ENCODE measurements at regions of chr19 and their contacts with region 1.

Region 1: DNA sequence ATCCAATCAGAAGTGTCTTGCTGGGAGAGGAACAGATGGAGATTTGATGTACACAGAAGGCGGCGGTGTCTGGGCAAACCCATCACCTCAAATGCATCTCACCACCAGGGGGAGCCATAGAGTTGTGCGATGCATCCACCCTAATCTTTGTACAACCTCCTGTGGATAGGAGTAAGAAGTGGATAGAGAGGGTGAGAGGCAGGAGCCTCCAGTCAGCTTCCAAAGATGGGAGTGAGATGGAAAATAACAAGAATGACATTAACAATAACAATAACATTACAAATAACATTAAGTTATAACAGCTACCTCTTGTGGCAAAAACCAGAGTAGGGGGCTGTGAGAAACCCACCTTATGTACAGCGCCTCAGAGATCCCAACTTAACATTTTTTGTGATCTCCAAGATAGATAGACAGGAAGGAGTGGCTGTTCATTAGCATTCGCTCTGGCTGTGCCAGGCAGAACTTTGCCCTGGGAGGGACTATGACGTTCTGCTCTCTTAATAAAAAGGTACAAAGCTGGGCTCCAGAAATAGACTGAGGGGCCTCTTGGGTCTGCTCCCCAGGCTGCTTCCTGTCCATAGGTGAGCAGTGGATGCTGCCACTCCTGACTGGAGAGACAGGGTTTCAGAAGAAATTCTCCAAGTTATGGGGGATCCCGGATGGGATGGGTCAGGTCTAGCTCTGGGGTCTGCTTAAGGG is 5.2 kb upstream of the CEACAM18 start:
- DNase-seq: peak; percentile 95
- ATAC-seq: peak; percentile 93
- H3K4me3 Mint-ChIP-seq: no peak overlapping the region
- H3K27ac Mint-ChIP-seq: no peak overlapping the region
- H3K4me1 Mint-ChIP-seq: peaks cover 18% of the 10 kb centered on the region
- H3K27me3 Mint-ChIP-seq: peaks cover 8% of the 10 kb centered on the region
- CTCF ChIP-seq: peak; percentile 96

Region 2: GRCh38 chr19:51399231-51399630 is 73.9 kb before region 1 on chr19:
- CTCF ChIA-PET with region 1: interaction called, 11 read pairs
- POLR2A ChIA-PET with region 1: no interaction called
- intact Hi-C with region 1: no loop called
- DNase-seq: no peak
- ATAC-seq: no peak
- H3K4me3 Mint-ChIP-seq: no peak overlapping the region
- H3K27ac Mint-ChIP-seq: no peak overlapping the region
- H3K4me1 Mint-ChIP-seq: peaks cover 36% of the 10 kb centered on the region
- H3K27me3 Mint-ChIP-seq: no peaks in the 10 kb centered on the region
- CTCF ChIP-seq: no peak

Region 3: GRCh38 chr19:51441410-51442390 is 31.5 kb before region 1 on chr19:
- CTCF ChIA-PET with region 1: interaction called, 10 read pairs
- POLR2A ChIA-PET with region 1: interaction called, 3 read pairs
- intact Hi-C with region 1: no loop called
- DNase-seq: peak; percentile 99
- ATAC-seq: peak; percentile 90
- H3K4me3 Mint-ChIP-seq: peak overlapping the region; percentile 74
- H3K27ac Mint-ChIP-seq: peak overlapping the region; percentile 94
- H3K4me1 Mint-ChIP-seq: peaks cover 61% of the 10 kb centered on the region
- H3K27me3 Mint-ChIP-seq: peaks cover 3% of the 10 kb centered on the region
- CTCF ChIP-seq: no peak

Region 4: DNA sequence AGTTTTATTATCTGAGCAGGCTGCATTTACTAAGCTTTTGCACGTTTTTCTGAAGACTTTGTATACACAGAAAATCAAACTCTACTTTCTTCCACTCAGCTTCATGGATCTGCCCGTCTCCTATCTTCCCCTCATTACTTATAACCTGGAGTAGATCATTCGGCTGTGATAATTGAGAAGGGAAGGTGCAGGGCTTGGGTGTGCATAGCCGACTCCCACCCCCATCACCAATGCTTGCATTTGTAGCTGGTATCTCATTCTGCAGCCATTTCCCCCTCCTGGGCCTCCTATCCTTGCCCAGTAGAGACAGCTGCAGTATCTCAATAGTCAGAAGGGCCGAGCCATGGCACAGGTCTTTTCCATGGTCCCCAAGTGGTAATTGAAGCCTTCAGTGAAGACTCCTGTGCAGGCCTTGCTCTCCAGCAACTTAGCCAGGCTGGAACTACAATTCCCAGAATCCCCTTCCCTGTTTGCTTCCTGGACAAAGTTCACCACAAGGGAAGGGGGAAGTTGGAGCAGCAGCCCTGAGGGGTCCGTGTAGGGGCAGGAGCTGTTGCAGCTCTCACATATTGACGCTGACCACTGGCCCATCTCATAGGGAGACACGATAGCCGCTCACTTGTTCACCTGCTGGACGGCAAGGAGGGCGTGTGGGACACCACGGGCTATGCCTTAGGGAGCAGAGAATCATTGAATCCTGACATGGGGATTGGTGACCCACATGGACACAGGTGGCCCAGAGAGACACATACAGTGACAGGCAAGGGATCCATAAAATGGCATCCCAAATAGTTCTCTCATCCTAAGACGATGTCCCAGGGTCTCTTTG is 12.8 kb before region 1 on chr19:
- CTCF ChIA-PET with region 1: interaction called, 34 read pairs
- POLR2A ChIA-PET with region 1: no interaction called
- intact Hi-C with region 1: no loop called
- DNase-seq: no peak
- ATAC-seq: no peak
- H3K4me3 Mint-ChIP-seq: no peak overlapping the region
- H3K27ac Mint-ChIP-seq: no peak overlapping the region
- H3K4me1 Mint-ChIP-seq: peaks cover 17% of the 10 kb centered on the region
- H3K27me3 Mint-ChIP-seq: peaks cover 47% of the 10 kb centered on the region
- CTCF ChIP-seq: no peak

Region 5: DNA sequence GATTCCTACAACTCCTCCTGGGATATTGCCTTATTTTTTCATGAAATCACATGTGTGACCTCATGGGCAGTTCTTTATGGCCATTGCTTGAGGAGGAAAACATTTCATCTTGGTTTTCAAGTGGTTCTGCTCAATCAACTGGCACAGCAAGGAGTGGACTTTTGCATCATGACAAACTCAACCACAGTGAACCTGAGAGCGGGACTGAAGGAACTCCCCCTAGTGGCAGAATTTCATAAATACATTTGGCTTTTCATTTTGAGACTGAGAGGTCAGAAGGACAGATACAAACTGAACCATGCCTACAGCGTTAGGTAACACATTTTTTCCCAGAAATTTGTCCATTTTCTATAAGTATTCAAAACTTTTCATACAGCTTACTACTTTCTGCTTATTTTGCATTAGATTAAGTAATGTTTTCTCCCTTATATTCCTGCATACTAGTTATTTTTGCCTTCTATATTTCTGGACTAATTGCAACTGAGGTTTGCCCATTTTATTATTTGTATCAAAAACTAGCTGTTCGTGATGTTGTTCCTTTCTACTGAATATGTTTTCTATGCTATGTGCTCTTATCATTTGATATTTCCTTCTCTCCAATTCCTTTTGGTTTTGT is 41.8 kb after region 1 on chr19:
- CTCF ChIA-PET with region 1: interaction called, 114 read pairs
- POLR2A ChIA-PET with region 1: interaction called, 3 read pairs
- intact Hi-C with region 1: loop called (anchors 5 kb)
- DNase-seq: peak; percentile 32
- ATAC-seq: peak; percentile 53
- H3K4me3 Mint-ChIP-seq: no peak overlapping the region
- H3K27ac Mint-ChIP-seq: no peak overlapping the region
- H3K4me1 Mint-ChIP-seq: peaks cover 6% of the 10 kb centered on the region
- H3K27me3 Mint-ChIP-seq: peaks cover 17% of the 10 kb centered on the region
- CTCF ChIP-seq: peak; percentile 80

Region 6: GRCh38 chr19:51660975-51661600 is 187.9 kb after region 1 on chr19:
- CTCF ChIA-PET with region 1: interaction called, 82 read pairs
- POLR2A ChIA-PET with region 1: no interaction called
- intact Hi-C with region 1: loop called (anchors 5 kb)
- DNase-seq: peak; percentile 86
- ATAC-seq: peak; percentile 74
- H3K4me3 Mint-ChIP-seq: no peak overlapping the region
- H3K27ac Mint-ChIP-seq: no peak overlapping the region
- H3K4me1 Mint-ChIP-seq: peaks cover 5% of the 10 kb centered on the region
- H3K27me3 Mint-ChIP-seq: peaks cover 32% of the 10 kb centered on the region
- CTCF ChIP-seq: peak; percentile 73